ENCODE measurements at regions of chr20 and their contacts with region 1.

Region 1: DNA sequence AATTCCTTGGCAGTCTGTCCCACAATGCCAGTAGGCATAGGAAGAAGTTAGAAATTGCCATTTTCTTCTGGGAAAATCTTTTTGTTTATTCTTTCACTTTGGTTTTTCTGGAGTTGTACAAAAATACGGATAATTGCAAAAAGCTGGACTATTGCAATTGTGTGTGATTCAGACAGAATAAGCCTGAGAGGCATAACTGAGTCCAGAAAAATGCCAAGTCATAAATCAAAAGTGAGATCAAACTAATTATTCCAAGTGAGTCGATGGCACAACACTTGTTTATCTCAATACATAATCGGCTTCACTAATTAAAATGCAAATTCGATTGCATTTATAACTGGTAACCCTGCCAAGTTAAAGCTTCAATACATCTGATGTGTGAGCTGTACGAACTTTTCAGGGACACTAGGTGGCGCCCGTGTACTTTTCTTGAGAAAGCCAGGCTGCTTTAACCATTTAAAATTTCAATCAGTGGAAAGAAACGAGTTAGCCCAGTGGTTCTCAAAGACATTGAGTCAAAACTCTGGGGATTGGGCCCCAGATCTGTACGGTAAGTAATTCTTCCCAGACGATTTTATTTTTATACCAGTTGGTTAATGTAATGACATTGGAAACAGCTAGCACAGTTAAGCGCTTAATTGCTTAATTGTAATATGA is 102.6 kb downstream of the LAMP5 start:
- DNase-seq: peak; percentile 49 to 76 (median 66)
- H3K4me3 ChIP-seq: peak overlapping the region in 16 of 59 donors; percentile 9 to 37 (median 24)
- H3K27ac ChIP-seq: peak overlapping the region in 26 of 59 donors; percentile 14 to 83 (median 51)
- H3K27me3 ChIP-seq: no peaks in the 10 kb centered on the region
- CTCF ChIP-seq: peak; percentile 73 to 98 (median 90)

Region 2: GRCh38 chr20:9912858-9913434 is 296.0 kb after region 1 on chr20:
- intact Hi-C with region 1: loop called (anchors 2 to 5 kb)
- DNase-seq: peak in 8 of 10 donors; percentile 15 to 73 (median 46)
- H3K4me3 ChIP-seq: no peak overlapping the region
- H3K27ac ChIP-seq: no peak overlapping the region
- H3K27me3 ChIP-seq: peaks cover 0 to 9% (median 0%) of the 10 kb centered on the region in 45 donors
- CTCF ChIP-seq: peak; percentile 69 to 94 (median 84)

Region 3: GRCh38 chr20:9966966-9967365 is 350.0 kb after region 1 on chr20:
- intact Hi-C with region 1: loop called (anchors 2 to 10 kb)
- DNase-seq: peak in 1 of 10 donors; percentile 11
- H3K4me3 ChIP-seq: no peak overlapping the region
- H3K27ac ChIP-seq: no peak overlapping the region
- H3K27me3 ChIP-seq: peaks cover 0 to 2% (median 0%) of the 10 kb centered on the region in 45 donors
- CTCF ChIP-seq: peak in 45 of 56 donors; percentile 13 to 55 (median 41)

Region 4: DNA sequence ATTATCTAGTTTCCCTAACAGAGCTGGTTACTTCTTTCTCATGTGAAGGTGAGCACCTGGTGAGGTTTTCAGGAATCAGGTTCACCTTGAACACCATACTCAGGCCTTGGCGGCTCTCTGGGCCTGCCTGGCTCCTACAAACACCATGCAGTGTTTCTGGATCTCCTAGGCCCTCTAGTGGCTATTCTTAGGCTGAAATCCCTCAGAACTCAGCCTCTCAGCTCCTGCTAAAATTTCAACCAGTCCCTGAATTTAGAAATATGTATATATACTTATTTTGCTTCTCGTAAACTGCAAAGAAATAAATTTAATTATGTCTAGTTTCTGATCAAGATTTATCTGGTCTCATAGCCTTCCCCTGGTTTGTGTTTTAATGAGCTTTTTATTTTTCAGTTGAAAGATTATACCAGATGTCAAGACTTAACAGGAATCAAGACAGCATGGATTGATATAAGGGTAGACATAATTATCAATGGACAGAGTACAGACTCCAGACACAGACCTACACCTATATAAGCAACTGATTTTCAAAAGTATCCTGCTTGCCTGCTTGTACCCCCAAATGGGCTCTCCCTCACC is 473.7 kb after region 1 on chr20:
- intact Hi-C with region 1: loop called in 1 of 2 experiments (anchors 10 kb)
- DNase-seq: peak in 9 of 10 donors; percentile 29 to 62 (median 48)
- H3K4me3 ChIP-seq: no peak overlapping the region
- H3K27ac ChIP-seq: peak overlapping the region in 9 of 59 donors; percentile 1 to 25 (median 11)
- H3K27me3 ChIP-seq: no peaks in the 10 kb centered on the region
- CTCF ChIP-seq: peak in 54 of 56 donors; percentile 54 to 85 (median 73)

Region 5: GRCh38 chr20:10225439-10226060 is 608.6 kb after region 1 on chr20:
- intact Hi-C with region 1: loop called in 1 of 2 experiments (anchors 10 kb)
- DNase-seq: no peak
- H3K4me3 ChIP-seq: peak overlapping the region in 32 of 59 donors; percentile 0 to 85 (median 34)
- H3K27ac ChIP-seq: no peak overlapping the region
- H3K27me3 ChIP-seq: no peaks in the 10 kb centered on the region
- CTCF ChIP-seq: peak in 10 of 56 donors; percentile 9 to 31 (median 16)

Region 6: GRCh38 chr20:10434467-10434831 is 817.5 kb after region 1 on chr20:
- intact Hi-C with region 1: loop called (anchors 5 to 10 kb)
- DNase-seq: peak; percentile 83 to 95 (median 92)
- H3K4me3 ChIP-seq: peak overlapping the region; percentile 68 to 100 (median 94)
- H3K27ac ChIP-seq: peak overlapping the region; percentile 84 to 99 (median 98)
- H3K27me3 ChIP-seq: no peaks in the 10 kb centered on the region
- CTCF ChIP-seq: peak in 2 of 56 donors; percentile 6 to 12

Region 7: GRCh38 chr20:11544029-11544678 is 1927.2 kb after region 1 on chr20:
- intact Hi-C with region 1: loop called (anchors 5 to 10 kb)
- DNase-seq: peak in 1 of 10 donors; percentile 34
- H3K4me3 ChIP-seq: peak overlapping the region in 38 of 59 donors; percentile 3 to 53 (median 29)
- H3K27ac ChIP-seq: no peak overlapping the region
- H3K27me3 ChIP-seq: no peaks in the 10 kb centered on the region
- CTCF ChIP-seq: peak; percentile 50 to 89 (median 73)